CD4-positive, alpha-beta T cell (primary cell): ENCODE measurements at regions of chr15 and their contacts with region 1.

Region 1: DNA sequence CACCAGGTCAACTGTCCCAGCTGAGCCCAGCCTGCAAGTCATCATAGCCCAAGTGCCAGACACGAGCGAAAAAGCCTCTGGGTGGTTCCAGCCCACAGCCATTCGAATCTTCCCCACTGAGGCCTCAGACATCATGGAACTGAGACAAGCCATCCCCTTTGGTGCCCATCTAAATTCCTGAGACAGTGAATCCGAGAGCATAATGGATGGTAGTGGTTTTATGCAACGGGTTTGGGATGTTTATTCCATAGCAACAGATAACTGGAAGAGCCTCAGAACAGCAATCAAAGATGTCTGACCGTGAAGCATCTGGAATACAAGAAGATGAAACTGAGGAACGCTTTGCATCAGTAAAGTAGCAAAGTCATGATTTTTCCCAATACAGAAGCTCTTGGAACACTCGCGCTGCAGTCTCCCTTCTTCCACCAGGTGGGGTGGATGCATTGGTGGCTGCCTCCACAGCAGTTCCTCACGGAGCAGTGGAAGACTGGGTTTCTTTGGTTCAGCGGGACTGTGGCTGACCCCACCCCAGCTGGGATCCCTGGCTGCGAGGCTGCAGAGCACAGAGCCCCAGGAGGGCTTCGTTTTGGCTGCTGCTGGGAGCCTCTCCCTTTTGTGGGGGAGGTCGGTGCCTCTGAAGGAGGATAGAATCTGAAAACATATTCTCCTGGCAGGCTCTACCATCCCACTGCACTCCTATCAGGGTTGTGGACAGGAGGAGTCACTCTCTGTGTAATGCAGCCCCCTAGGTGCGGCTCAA is 26.4 kb upstream of the PDE8A start:
- DNase-seq: peak; percentile 13 to 72 (median 42)
- ATAC-seq: peak; percentile 63
- H3K4me3 ChIP-seq: no peak overlapping the region
- H3K4me3 Mint-ChIP-seq: no peak overlapping the region
- H3K27ac ChIP-seq: no peak overlapping the region
- H3K27ac Mint-ChIP-seq: no peak overlapping the region
- H3K4me1 ChIP-seq: peaks cover 5% of the 10 kb centered on the region
- H3K4me1 Mint-ChIP-seq: peaks cover 6% of the 10 kb centered on the region
- H3K27me3 ChIP-seq: peaks cover 0 to 4% of the 10 kb centered on the region in 2 experiments
- H3K27me3 Mint-ChIP-seq: peaks cover 6% of the 10 kb centered on the region
- CTCF ChIP-seq: peak; percentile 69

Region 2: DNA sequence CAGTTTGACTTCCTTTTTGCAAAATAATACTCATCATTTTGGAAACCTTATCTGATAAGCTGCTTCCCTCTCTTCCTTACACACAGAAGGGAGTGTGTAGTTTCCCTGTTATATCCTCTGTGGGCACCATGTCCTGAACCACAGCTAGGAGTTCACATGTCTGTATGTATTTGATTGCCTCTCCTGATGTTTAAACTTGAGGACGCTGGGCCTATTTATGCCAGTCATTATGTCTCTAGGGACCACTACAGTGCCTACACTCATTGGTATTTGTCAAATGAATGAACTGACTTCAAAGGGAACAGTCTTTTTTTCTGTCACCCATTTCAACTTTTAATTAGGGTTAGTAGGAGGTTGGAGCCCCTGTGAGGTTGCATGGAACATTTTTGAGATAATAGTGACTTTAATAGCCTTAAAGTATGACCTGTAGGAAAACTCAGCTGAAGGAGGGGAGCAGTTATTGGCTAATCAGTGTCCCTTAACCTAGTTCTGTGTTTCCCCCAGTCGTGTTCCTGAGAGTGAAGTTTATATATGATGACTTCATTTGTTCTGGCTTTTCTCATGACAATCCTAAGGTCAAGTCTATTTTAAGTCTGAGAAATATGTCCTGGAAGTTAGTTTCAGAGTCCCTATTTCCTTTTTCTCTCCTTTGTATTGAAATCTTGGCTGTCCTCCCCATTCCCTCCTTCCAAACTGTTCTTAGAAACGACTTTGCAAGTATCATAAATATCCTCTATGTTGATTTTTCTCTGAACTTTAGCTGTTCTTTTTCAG is 55.3 kb after region 1 on chr15:
- CTCF ChIA-PET with region 1: interaction called, 22 read pairs
- POLR2A ChIA-PET with region 1: no interaction called
- intact Hi-C with region 1: no loop called
- DNase-seq: no peak
- ATAC-seq: no peak
- H3K4me3 ChIP-seq: no peak overlapping the region
- H3K4me3 Mint-ChIP-seq: no peak overlapping the region
- H3K27ac ChIP-seq: no peak overlapping the region
- H3K27ac Mint-ChIP-seq: no peak overlapping the region
- H3K4me1 ChIP-seq: peaks cover 8% of the 10 kb centered on the region
- H3K4me1 Mint-ChIP-seq: peaks cover 63% of the 10 kb centered on the region
- H3K27me3 ChIP-seq: no peaks in the 10 kb centered on the region
- H3K27me3 Mint-ChIP-seq: no peaks in the 10 kb centered on the region
- CTCF ChIP-seq: no peak

Region 3: DNA sequence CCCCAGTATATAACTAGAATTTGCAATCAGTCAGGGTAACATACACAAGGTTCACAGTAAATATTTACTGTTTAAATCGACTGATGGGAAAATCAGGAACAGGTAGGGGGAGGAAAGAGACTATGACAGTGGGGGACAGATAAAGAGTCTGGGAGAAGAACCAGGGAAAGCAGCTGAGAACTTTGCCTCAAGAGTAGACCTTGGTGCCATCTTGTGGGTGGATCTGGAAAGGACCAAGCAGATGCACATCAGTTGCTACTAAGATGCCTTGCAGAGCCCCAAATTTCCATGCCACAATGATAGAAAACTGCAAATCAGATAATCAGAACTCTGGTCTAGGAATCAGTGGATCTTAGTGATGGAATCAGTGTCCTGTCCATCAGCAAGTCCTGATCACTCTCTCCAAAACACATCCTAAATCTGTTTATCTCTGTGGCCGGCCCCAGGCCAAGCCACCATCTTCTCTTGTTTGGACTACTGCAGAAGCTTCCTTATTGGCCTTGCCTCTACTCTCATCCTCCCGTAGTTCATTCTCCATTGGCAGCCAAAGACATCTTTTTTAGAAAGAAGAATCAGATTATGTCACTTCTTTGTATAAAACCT is 89.1 kb after region 1 on chr15:
- CTCF ChIA-PET with region 1: interaction called, 4 read pairs
- POLR2A ChIA-PET with region 1: interaction called, 3 read pairs
- intact Hi-C with region 1: loop called (anchors 1 kb)
- DNase-seq: peak; percentile 18 to 76 (median 40)
- ATAC-seq: peak; percentile 65
- H3K4me3 ChIP-seq: no peak overlapping the region
- H3K4me3 Mint-ChIP-seq: no peak overlapping the region
- H3K27ac ChIP-seq: no peak overlapping the region
- H3K27ac Mint-ChIP-seq: no peak overlapping the region
- H3K4me1 ChIP-seq: no peaks in the 10 kb centered on the region
- H3K4me1 Mint-ChIP-seq: peaks cover 42% of the 10 kb centered on the region
- H3K27me3 ChIP-seq: no peaks in the 10 kb centered on the region
- H3K27me3 Mint-ChIP-seq: no peaks in the 10 kb centered on the region
- CTCF ChIP-seq: peak; percentile 62